ENCODE measurements at regions of chr6 and their contacts with region 1.

Region 1: GRCh38 chr6:52284460-52285176 is at the start of gene MCM3:
- DNase-seq: peak; percentile 98
- H3K4me3 Mint-ChIP-seq: no peak within 1 kb of the TSS
- H3K27ac Mint-ChIP-seq: no peak within 1 kb of the TSS
- H3K4me1 Mint-ChIP-seq: peaks cover 51% of the 10 kb centered on the region
- H3K27me3 Mint-ChIP-seq: no peaks in the 10 kb centered on the region
- total RNA-seq, gene MCM3: 256 to 258 TPM

Region 2: GRCh38 chr6:52020945-52021570 is 263.6 kb before region 1 on chr6:
- CTCF ChIA-PET with region 1: no interaction called
- intact Hi-C with region 1: no loop called
- DNase-seq: no peak
- H3K4me3 Mint-ChIP-seq: no peak overlapping the region
- H3K27ac Mint-ChIP-seq: no peak overlapping the region
- H3K4me1 Mint-ChIP-seq: no peaks in the 10 kb centered on the region
- H3K27me3 Mint-ChIP-seq: peaks cover 6% of the 10 kb centered on the region

Region 3: GRCh38 chr6:52157301-52157941 is 127.2 kb before region 1 on chr6:
- CTCF ChIA-PET with region 1: interaction called, 22 read pairs
- intact Hi-C with region 1: loop called (anchors 1 kb)
- DNase-seq: peak; percentile 50
- H3K4me3 Mint-ChIP-seq: no peak overlapping the region
- H3K27ac Mint-ChIP-seq: peak overlapping the region; percentile 74
- H3K4me1 Mint-ChIP-seq: peaks cover 53% of the 10 kb centered on the region
- H3K27me3 Mint-ChIP-seq: peaks cover 22% of the 10 kb centered on the region

Region 4: DNA sequence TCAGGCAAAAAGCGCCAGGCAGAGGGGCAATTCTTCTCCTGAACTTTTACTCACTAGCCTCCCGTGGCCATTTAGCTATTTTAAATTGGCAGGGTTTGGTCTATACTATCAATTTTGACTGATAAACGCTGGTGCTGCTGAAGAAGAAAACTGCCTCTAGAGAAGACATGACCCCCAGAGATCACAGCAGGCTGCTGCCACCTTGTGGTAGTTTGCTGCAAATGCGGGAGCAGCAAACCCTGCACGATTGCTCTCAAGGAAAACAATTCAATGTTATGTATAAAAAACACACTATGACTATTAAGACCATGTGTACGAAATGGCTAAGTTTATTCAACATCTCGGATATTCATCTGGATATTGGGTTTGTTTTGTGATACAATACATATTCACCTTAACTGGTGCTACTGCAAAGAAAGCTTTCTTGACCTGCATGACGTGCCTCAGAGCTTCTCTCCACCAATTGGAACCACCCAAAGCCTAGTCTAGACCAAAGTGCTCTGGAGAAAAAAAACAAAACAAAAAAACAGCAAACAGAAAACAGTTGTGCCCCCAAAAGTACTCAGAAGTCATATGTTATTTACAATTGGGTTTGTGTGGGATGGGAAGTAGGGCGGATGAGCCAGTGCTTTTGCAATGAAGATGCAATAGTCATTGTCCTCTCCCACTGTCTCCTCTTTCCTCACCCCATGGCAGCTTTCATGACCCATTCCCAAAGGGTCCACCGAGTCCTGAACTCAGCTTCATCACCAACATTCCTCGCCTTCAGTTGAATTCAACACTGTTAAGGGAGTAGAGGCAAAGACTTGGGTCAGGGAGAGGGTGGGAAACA is 20.7 kb before region 1 on chr6:
- CTCF ChIA-PET with region 1: interaction called, 22 read pairs
- intact Hi-C with region 1: loop called (anchors 2 kb)
- DNase-seq: peak; percentile 84
- H3K4me3 Mint-ChIP-seq: no peak overlapping the region
- H3K27ac Mint-ChIP-seq: peak overlapping the region; percentile 23
- H3K4me1 Mint-ChIP-seq: peaks cover 15% of the 10 kb centered on the region
- H3K27me3 Mint-ChIP-seq: no peaks in the 10 kb centered on the region

Region 5: DNA sequence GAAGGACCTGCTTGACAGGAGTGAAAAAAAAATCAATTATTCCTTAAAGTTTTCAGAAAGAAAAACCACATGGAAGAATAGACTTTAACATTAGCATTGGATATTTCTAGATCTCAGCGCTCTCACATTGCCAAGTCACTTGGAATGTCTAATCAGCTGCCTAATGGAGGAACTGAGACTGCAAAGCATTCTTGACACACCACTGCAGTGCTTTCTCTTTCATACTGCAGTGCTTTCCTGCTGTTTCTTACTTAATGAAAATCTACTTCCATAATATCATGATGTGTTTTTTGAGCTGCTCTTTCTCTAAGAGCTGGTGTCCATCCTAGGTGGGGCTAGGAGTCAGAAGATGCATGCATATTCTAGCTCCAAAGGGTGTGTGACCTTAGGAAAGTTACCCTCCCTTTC is 20.4 kb after region 1 on chr6:
- CTCF ChIA-PET with region 1: interaction called, 49 read pairs
- intact Hi-C with region 1: loop called (anchors 1 kb)
- DNase-seq: no peak
- H3K4me3 Mint-ChIP-seq: peak overlapping the region; percentile 27
- H3K27ac Mint-ChIP-seq: peak overlapping the region; percentile 77
- H3K4me1 Mint-ChIP-seq: peaks cover 65% of the 10 kb centered on the region
- H3K27me3 Mint-ChIP-seq: no peaks in the 10 kb centered on the region

Region 6: DNA sequence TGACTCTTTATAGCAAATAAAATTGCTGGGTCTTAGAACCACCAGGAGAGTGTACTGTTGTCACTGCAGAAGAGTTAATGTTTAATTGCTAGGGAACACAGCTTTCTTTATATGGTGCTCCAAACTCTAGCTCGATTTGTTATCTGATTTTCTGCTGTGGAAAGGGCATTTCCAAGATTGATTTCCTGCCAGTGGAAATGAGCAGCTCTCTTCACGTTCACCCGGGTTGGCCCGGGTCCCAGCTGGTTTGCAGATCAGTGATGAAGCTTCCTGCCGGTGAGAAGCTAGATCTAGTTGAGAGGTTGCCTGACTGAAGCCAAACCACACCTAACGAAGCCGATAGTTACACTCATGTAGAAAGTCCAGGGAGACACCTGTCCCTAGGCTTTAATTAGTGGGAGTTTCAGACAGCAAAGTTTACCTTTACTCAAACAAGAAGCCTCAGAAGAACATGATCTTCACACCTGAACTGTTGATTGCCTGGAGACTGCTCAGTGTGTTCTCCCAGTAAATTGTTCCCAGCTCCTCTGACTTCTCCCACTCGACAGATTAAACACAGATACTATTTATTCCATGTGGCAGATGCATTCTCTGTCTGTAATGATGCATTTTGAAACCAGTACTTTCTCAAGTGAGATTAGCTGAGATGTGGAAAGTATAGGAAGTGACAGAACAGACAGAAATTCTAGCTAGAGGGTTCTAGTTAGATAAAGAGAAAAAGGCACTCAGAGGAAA is 105.2 kb after region 1 on chr6:
- CTCF ChIA-PET with region 1: interaction called, 52 read pairs
- intact Hi-C with region 1: loop called (anchors 1 kb)
- DNase-seq: peak; percentile 79
- H3K4me3 Mint-ChIP-seq: peak overlapping the region; percentile 14
- H3K27ac Mint-ChIP-seq: peak overlapping the region; percentile 81
- H3K4me1 Mint-ChIP-seq: peaks cover 75% of the 10 kb centered on the region
- H3K27me3 Mint-ChIP-seq: no peaks in the 10 kb centered on the region

Region 7: GRCh38 chr6:52577022-52577777 is 292.6 kb after region 1 on chr6 and contains the start of gene TRAM2:
- CTCF ChIA-PET with region 1: no interaction called
- intact Hi-C with region 1: loop called (anchors 1 kb)
- DNase-seq: peak; percentile 65
- H3K4me3 Mint-ChIP-seq: peak within 1 kb of the TSS; percentile 78
- H3K27ac Mint-ChIP-seq: peak within 1 kb of the TSS; percentile 65
- H3K4me1 Mint-ChIP-seq: peaks cover 43% of the 10 kb centered on the region
- H3K27me3 Mint-ChIP-seq: no peaks in the 10 kb centered on the region
- total RNA-seq, gene TRAM2: 2.5 to 2.9 TPM

Region 8: DNA sequence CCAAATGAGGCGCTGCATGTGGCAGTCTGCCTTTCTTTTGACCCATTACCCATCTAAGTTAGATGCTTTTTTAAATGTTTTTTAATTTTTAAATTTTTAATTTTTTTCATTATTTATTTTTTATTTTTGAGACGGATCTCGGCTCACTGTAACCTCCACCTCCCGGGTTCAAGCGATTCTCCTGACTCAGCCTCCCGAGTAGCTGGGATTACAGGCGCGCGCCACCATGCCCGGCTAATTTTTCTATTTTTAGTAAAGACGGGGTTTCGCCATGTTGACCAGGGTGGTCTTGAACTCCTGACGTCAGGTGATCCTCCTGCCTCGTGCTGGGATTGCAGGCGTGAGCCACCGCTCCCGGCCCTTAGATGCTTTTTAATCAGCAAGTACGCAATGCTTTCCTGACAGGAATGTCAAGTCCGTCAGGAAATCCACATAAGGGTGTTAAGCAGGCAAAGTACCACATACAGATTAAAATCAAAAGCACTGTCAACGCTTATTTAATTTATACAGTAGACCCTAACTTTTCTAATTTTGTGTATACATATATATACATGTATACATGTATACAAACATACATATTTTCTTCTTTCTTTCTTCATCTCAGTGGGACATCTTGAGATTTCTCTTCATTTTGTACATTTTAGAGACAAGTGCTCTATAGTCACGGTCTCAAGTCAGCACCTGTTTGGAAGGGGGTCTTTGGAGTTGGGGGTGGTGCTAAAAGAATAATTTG is 711.5 kb after region 1 on chr6:
- CTCF ChIA-PET with region 1: no interaction called
- intact Hi-C with region 1: loop called (anchors 2 kb)
- DNase-seq: peak; percentile 54
- H3K4me3 Mint-ChIP-seq: peak overlapping the region; percentile 98
- H3K27ac Mint-ChIP-seq: peak overlapping the region; percentile 99
- H3K4me1 Mint-ChIP-seq: peaks cover 29% of the 10 kb centered on the region
- H3K27me3 Mint-ChIP-seq: peaks cover 13% of the 10 kb centered on the region